Activated CD8-positive, alpha-beta memory T cell treated with anti-CD3 and anti-CD28 coated beads, Interleukin-2, amount 10 ng/mL, durations not matched to agents 7 days and 5 days (primary cell): ENCODE measurements at regions of chr5 and their contacts with region 1.

Region 1: DNA sequence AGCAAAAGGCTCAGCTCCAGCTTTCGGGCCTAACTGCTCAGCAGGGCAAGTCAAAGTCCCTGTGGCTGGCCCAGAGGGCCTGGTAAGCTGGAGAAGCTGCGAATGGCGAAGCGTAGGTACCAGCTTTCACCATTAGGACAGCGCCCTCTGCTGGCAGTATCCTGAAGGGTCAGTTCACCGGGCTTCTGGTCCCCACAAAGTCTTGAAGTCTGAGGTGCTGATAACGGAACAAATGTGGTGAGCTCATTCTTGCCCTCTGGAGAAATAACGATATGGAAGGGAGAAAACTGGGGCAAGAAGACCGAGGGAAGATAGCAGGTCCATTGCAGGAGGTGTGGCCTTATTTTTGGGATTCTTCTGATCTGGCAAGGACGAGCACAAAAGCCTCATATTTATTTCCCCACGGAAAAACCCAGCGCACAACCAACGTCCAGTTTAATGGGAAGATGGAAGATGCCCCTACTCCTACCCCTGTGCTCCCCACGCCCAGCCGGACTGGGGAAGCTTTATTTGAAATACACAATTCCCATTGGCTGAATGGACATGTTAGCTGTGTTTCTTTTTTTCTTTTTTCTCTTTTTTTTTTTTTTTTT is 7.2 kb downstream of the SOWAHA start:
- DNase-seq: peak; percentile 94
- ATAC-seq: peak; percentile 96
- H3K4me3 Mint-ChIP-seq: no peak overlapping the region
- H3K27ac Mint-ChIP-seq: no peak overlapping the region
- H3K4me1 Mint-ChIP-seq: peaks cover 25% of the 10 kb centered on the region
- H3K27me3 Mint-ChIP-seq: peaks cover 27% of the 10 kb centered on the region

Region 2: GRCh38 chr5:132386644-132387286 is 433.5 kb before region 1 on chr5:
- CTCF ChIA-PET with region 1: interaction called, 13 read pairs
- DNase-seq: peak; percentile 88
- ATAC-seq: peak; percentile 96
- H3K4me3 Mint-ChIP-seq: no peak overlapping the region
- H3K27ac Mint-ChIP-seq: peak overlapping the region; percentile 69
- H3K4me1 Mint-ChIP-seq: peaks cover 50% of the 10 kb centered on the region
- H3K27me3 Mint-ChIP-seq: no peaks in the 10 kb centered on the region

Region 3: DNA sequence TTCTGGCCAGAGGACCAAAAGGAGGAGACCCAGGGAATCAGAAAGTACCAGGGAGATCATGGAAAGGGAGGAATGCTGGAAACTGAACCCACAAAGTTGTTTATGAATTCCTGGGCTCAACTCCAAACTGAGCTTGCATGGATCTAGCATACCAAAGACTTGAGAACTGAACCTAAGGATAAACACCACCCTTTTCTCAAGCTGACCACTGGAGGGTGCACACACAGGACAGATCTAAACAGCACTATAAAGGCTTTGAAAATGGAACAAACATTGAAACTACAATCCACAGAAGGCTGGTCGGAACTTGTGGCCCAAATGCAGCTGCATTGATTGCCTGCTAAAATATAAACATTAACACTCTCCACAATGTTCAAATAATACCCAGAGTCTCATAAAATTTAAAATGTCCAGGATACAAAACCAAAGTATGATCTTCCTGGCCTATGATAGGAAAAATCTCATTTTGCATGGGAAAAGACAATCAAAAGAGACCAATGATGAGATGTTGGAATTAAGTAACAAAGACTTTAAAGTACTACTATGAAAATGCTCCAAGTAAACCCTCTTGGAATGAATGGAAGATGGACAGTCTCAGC is 314.1 kb before region 1 on chr5:
- CTCF ChIA-PET with region 1: interaction called, 28 read pairs
- DNase-seq: no peak
- ATAC-seq: peak; percentile 62
- H3K4me3 Mint-ChIP-seq: no peak overlapping the region
- H3K27ac Mint-ChIP-seq: no peak overlapping the region
- H3K4me1 Mint-ChIP-seq: peaks cover 11% of the 10 kb centered on the region
- H3K27me3 Mint-ChIP-seq: peaks cover 13% of the 10 kb centered on the region

Region 4: GRCh38 chr5:132639706-132640130 is 180.5 kb before region 1 on chr5:
- CTCF ChIA-PET with region 1: interaction called, 16 read pairs
- DNase-seq: peak; percentile 81
- ATAC-seq: peak; percentile 54
- H3K4me3 Mint-ChIP-seq: peak overlapping the region; percentile 16
- H3K27ac Mint-ChIP-seq: peak overlapping the region; percentile 86
- H3K4me1 Mint-ChIP-seq: peaks cover 89% of the 10 kb centered on the region
- H3K27me3 Mint-ChIP-seq: no peaks in the 10 kb centered on the region

Region 5: DNA sequence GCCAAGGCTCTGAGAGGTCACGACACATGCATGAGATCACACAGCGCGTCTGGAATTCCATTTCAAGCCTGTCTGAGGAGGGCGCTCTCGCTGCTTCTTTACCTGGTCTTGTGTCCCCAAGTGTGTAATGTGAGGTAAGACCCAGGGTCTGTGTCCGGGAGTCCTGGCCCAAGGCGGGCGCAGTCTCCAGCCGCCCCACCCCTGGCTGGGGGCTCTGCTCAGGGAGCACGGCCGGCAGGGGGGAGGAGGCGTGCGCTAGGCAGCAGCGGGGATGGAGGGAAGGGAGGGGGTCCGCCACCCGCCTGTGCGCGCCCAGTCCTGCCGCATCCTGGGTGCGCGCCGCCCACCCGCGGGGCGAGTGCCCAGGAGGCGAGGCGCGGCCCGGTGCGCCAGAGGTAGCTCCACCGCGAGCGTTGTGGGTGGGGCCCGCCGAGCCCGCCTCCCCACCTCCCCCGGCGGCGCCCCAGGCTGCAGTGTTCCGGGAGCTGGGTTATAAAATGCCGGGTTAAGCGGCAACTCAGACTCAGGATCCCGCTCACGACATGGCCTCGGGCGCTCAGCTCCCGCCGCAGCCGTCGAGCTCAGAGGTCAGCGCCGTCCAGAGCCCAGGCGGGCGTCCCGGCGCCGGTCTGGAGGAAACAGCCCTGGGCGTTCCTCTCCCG is 73.2 kb before region 1 on chr5 and contains the start of gene CCNI2:
- CTCF ChIA-PET with region 1: interaction called, 18 read pairs
- DNase-seq: peak; percentile 73
- ATAC-seq: peak; percentile 87
- H3K4me3 Mint-ChIP-seq: peak within 1 kb of the TSS; percentile 76
- H3K27ac Mint-ChIP-seq: peak within 1 kb of the TSS; percentile 70
- H3K4me1 Mint-ChIP-seq: peaks cover 45% of the 10 kb centered on the region
- H3K27me3 Mint-ChIP-seq: peaks cover 10% of the 10 kb centered on the region
- total RNA-seq, gene CCNI2: 16.7 to 52.5 TPM